ENCODE measurements at regions of chr2 and their contacts with region 1.

Region 1: GRCh38 chr2:231925303-231926179 is 655 bp downstream of the NPPC start:
- DNase-seq: peak; percentile 96
- H3K4me3 ChIP-seq: peak overlapping the region; percentile 45 to 62
- H3K27ac ChIP-seq: no peak overlapping the region
- H3K4me1 ChIP-seq: peaks cover 0 to 20% of the 10 kb centered on the region in 2 experiments; a peak in 1 of 4 replicates
- H3K27me3 ChIP-seq: peaks cover 41% of the 10 kb centered on the region
- CTCF ChIP-seq: peak; percentile 79
- EP300 ChIP-seq: no peak
- RAD21 ChIP-seq: peak; percentile 73

Region 2: GRCh38 chr2:231900486-231900942 is 25.0 kb before region 1 on chr2:
- CTCF ChIA-PET with region 1: interaction called, 82 read pairs
- POLR2A ChIA-PET with region 1: no interaction called
- DNase-seq: peak; percentile 79
- H3K4me3 ChIP-seq: peak overlapping the region in 1 of 2 experiments; percentile 52; a peak in 1 of 4 replicates
- H3K27ac ChIP-seq: no peak overlapping the region
- H3K4me1 ChIP-seq: no peaks in the 10 kb centered on the region
- H3K27me3 ChIP-seq: no peaks in the 10 kb centered on the region; the same call in 1 of the 2 replicates
- CTCF ChIP-seq: peak; percentile 74
- EP300 ChIP-seq: no peak
- RAD21 ChIP-seq: peak; percentile 50

Region 3: DNA sequence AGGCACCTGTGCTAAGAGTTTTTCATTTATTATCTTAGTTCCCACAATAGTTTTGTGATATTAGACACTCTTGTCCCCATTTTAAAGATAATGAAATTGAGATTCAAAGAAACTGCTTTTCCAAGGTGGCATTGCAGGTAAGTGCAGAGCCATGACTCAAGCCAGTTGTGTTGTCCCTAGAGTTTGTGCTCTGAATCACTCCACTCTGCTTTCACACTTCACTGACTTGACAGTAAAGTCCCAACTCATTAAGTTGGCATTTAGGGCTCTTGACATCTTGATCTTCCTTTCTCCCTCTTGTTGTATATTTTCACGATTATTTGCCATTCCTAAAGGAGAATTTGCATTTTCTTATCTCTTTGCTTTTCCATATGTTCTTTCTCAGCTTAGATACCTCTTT is 150.3 kb after region 1 on chr2:
- CTCF ChIA-PET with region 1: no interaction called
- POLR2A ChIA-PET with region 1: no interaction called
- DNase-seq: no peak
- H3K4me3 ChIP-seq: no peak overlapping the region
- H3K27ac ChIP-seq: no peak overlapping the region
- H3K4me1 ChIP-seq: no peaks in the 10 kb centered on the region
- H3K27me3 ChIP-seq: no peaks in the 10 kb centered on the region
- CTCF ChIP-seq: no peak
- EP300 ChIP-seq: no peak
- RAD21 ChIP-seq: no peak

Region 4: GRCh38 chr2:232126301-232127099 is 201.0 kb after region 1 on chr2:
- CTCF ChIA-PET with region 1: interaction called, 17 read pairs
- POLR2A ChIA-PET with region 1: no interaction called
- DNase-seq: no peak
- H3K4me3 ChIP-seq: no peak overlapping the region
- H3K27ac ChIP-seq: no peak overlapping the region
- H3K4me1 ChIP-seq: no peaks in the 10 kb centered on the region
- H3K27me3 ChIP-seq: no peaks in the 10 kb centered on the region
- CTCF ChIP-seq: no peak
- EP300 ChIP-seq: no peak
- RAD21 ChIP-seq: no peak

Region 5: DNA sequence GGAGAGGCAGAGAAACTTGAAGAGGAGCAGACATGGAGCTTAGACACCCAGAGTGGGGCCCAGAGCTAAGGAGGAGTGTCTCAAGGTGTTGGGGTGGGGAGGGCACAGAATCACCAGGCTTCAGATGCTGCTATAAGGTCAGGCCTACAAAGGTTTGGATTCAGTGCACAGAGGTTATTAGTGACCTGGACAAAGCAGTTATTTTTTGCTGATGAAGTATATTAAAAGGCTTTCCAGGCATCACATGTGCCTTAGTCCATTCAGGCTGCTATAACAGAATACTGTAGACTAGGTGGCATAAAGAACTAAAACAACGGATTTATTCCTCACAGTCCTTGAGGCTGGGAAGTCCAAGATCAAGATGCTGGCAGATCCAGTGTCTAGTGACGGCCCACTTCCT is 307.4 kb after region 1 on chr2:
- CTCF ChIA-PET with region 1: interaction called, 10 read pairs
- POLR2A ChIA-PET with region 1: no interaction called
- DNase-seq: no peak
- H3K4me3 ChIP-seq: no peak overlapping the region
- H3K27ac ChIP-seq: no peak overlapping the region
- H3K4me1 ChIP-seq: peaks cover 0 to 3% of the 10 kb centered on the region in 2 experiments; a peak in 1 of 4 replicates
- H3K27me3 ChIP-seq: no peaks in the 10 kb centered on the region
- CTCF ChIP-seq: no peak
- EP300 ChIP-seq: no peak
- RAD21 ChIP-seq: no peak

Region 6: GRCh38 chr2:232327105-232328041 is 401.8 kb after region 1 on chr2:
- CTCF ChIA-PET with region 1: interaction called, 214 read pairs
- POLR2A ChIA-PET with region 1: no interaction called
- DNase-seq: peak; percentile 85
- H3K4me3 ChIP-seq: no peak overlapping the region
- H3K27ac ChIP-seq: no peak overlapping the region; a peak in 1 of 4 replicates
- H3K4me1 ChIP-seq: peaks cover 0 to 6% of the 10 kb centered on the region in 2 experiments; a peak in 1 of 4 replicates
- H3K27me3 ChIP-seq: no peaks in the 10 kb centered on the region
- CTCF ChIP-seq: peak; percentile 90
- EP300 ChIP-seq: no peak
- RAD21 ChIP-seq: peak; percentile 68

Region 7: GRCh38 chr2:232339121-232340081 is 413.9 kb after region 1 on chr2:
- CTCF ChIA-PET with region 1: interaction called, 29 read pairs
- POLR2A ChIA-PET with region 1: no interaction called
- DNase-seq: no peak
- H3K4me3 ChIP-seq: no peak overlapping the region
- H3K27ac ChIP-seq: no peak overlapping the region
- H3K4me1 ChIP-seq: no peaks in the 10 kb centered on the region
- H3K27me3 ChIP-seq: no peaks in the 10 kb centered on the region
- CTCF ChIP-seq: no peak; the same call in 1 of the 2 replicates
- EP300 ChIP-seq: no peak
- RAD21 ChIP-seq: no peak

Measured in SK-N-SH (cell line).